ENCODE measurements at regions of chr11 and their contacts with region 1.

Region 1: DNA sequence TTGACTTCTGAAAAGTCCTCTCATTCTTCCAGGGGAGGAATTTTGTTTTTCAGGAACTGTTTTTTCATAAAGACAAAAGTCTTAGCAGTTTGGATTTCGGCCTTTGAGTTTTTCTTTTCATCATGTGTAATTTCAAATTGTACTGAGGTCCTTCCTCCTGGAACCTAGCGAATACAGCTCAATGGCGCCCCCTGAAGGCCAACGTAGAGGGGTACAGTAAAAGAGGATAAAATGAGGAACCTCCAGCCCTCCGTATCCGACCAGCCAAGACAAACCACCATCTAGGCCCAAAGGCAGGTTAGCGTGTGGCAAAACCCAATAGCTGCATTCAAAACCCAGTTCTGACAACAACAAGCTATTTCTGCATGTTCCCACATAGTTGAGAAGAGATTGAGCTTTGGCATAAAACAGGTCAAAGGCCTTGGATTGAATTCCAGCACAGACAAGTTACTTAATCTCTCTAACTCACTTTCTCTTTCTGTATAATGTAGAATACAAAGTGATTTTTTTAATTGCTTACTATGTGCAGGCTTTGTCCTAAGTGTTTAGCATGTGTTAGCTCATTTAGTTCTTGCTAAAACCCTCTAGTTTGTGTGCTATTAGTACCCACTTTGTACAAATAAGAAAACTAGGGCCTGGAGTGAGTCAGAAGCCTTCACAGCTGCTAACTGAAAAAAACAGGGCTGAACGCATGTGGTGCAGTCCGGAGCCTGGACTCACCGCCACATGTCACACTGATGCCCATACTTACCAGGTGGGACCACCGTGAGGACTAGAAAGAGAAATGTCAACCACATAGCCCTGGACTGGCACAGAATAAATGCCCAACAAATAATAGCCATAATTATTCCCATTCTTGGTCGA is 43.2 kb upstream of the ETS1 start:
- DNase-seq: peak; percentile 97
- H3K4me3 Mint-ChIP-seq: peak overlapping the region; percentile 60
- H3K27ac Mint-ChIP-seq: peak overlapping the region; percentile 84
- H3K4me1 Mint-ChIP-seq: peaks cover 59% of the 10 kb centered on the region
- H3K27me3 Mint-ChIP-seq: no peaks in the 10 kb centered on the region

Region 2: GRCh38 chr11:128172046-128172878 is 458.3 kb before region 1 on chr11:
- CTCF ChIA-PET with region 1: interaction called, 190 read pairs
- intact Hi-C with region 1: loop called (anchors 1 kb)
- DNase-seq: peak; percentile 96
- H3K4me3 Mint-ChIP-seq: no peak overlapping the region
- H3K27ac Mint-ChIP-seq: no peak overlapping the region
- H3K4me1 Mint-ChIP-seq: peaks cover 7% of the 10 kb centered on the region
- H3K27me3 Mint-ChIP-seq: no peaks in the 10 kb centered on the region

Region 3: DNA sequence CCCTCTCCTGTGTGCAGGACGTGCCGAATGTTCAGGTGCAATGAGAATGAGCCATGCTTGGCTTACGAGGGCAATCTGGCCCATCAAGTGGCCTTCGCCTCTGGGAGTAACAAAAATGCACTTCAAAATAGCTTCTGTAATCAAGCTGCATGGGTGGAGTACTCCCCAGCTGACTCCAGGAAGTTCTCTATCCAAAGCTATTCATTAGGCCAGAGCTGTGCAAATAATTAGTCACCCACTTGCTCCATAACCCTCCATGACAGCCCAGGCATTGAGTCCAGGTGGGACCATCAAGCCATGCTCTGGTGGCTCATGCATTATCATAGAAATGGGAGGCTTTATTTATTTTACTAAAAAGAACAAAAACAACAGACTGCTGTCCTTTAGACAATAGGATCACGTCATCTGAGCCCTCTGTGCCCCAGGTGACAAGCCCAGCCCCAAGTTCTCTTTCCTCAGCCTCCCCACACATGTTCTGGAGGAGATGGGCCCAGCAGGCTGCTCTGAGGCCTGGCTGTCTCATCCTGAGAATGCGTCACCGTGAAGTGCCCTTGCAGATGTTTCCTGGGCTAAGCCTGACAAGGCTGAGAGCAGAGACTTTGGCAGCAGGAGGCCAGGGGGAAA is 288.0 kb before region 1 on chr11:
- CTCF ChIA-PET with region 1: interaction called, 4 read pairs
- intact Hi-C with region 1: loop called (anchors 1 kb)
- DNase-seq: peak; percentile 93
- H3K4me3 Mint-ChIP-seq: peak overlapping the region; percentile 73
- H3K27ac Mint-ChIP-seq: peak overlapping the region; percentile 89
- H3K4me1 Mint-ChIP-seq: peaks cover 93% of the 10 kb centered on the region
- H3K27me3 Mint-ChIP-seq: no peaks in the 10 kb centered on the region

Region 4: GRCh38 chr11:128506999-128507611 is 123.5 kb before region 1 on chr11:
- CTCF ChIA-PET with region 1: interaction called, 69 read pairs
- intact Hi-C with region 1: loop called (anchors 1 kb)
- DNase-seq: peak; percentile 82
- H3K4me3 Mint-ChIP-seq: peak overlapping the region; percentile 77
- H3K27ac Mint-ChIP-seq: peak overlapping the region; percentile 97
- H3K4me1 Mint-ChIP-seq: peaks cover 88% of the 10 kb centered on the region
- H3K27me3 Mint-ChIP-seq: no peaks in the 10 kb centered on the region

Region 5: DNA sequence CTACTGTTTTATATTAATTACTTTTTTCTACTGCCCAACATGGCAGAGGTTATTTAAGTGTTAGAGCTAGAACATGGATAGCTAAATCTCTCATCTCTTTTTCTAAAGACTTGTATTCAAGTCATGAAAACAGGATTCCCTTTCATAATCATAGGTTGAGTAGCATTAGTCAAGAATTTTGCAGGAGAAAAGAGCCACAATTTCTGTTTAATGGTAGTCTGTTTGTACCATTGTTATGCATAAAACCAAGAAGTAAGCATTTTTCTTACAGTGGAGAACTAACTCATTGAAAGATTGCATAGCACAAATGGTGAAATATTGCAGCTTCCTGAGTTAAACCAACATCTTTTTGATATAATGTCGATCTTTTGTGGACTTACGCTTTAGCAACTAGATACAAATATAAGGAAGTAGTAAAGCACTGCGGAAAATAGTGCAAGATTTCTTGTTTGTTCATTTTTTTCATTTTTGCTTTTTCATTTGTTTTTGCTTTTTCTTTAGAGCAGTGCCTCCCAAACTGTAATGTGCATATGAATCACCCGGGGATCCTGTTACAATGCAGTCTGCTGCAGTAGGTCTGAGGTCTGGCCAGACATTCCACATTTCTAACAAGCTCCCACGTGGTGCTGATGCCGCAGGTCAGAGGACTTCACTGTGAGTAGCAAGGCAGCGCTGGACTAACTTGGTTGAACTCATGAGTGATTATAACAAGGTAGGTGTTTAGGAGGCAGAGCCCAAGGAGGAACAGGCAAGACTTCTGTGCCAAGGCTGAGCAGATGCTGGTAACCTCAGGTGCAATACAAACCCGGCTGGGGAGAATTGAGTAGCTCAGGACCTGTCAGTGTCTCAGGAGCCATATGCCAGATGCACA is 47.9 kb before region 1 on chr11:
- CTCF ChIA-PET with region 1: interaction called, 10 read pairs
- intact Hi-C with region 1: no loop called
- DNase-seq: peak; percentile 50
- H3K4me3 Mint-ChIP-seq: peak overlapping the region; percentile 69
- H3K27ac Mint-ChIP-seq: peak overlapping the region; percentile 78
- H3K4me1 Mint-ChIP-seq: peaks cover 62% of the 10 kb centered on the region
- H3K27me3 Mint-ChIP-seq: no peaks in the 10 kb centered on the region

Region 6: GRCh38 chr11:128720522-128720985 is 90.0 kb after region 1 on chr11:
- CTCF ChIA-PET with region 1: no interaction called
- intact Hi-C with region 1: no loop called
- DNase-seq: peak; percentile 72
- H3K4me3 Mint-ChIP-seq: peak overlapping the region; percentile 73
- H3K27ac Mint-ChIP-seq: peak overlapping the region; percentile 87
- H3K4me1 Mint-ChIP-seq: peaks cover 97% of the 10 kb centered on the region
- H3K27me3 Mint-ChIP-seq: no peaks in the 10 kb centered on the region

Region 7: GRCh38 chr11:128783513-128783912 is 152.9 kb after region 1 on chr11:
- CTCF ChIA-PET with region 1: no interaction called
- intact Hi-C with region 1: no loop called
- DNase-seq: peak; percentile 13
- H3K4me3 Mint-ChIP-seq: no peak overlapping the region
- H3K27ac Mint-ChIP-seq: no peak overlapping the region
- H3K4me1 Mint-ChIP-seq: peaks cover 25% of the 10 kb centered on the region
- H3K27me3 Mint-ChIP-seq: no peaks in the 10 kb centered on the region

Region 8: GRCh38 chr11:128831174-128832120 is 200.8 kb after region 1 on chr11:
- CTCF ChIA-PET with region 1: interaction called, 36 read pairs
- intact Hi-C with region 1: loop called (anchors 1 kb)
- DNase-seq: peak; percentile 96
- H3K4me3 Mint-ChIP-seq: peak overlapping the region; percentile 8
- H3K27ac Mint-ChIP-seq: peak overlapping the region; percentile 85
- H3K4me1 Mint-ChIP-seq: peaks cover 17% of the 10 kb centered on the region
- H3K27me3 Mint-ChIP-seq: no peaks in the 10 kb centered on the region

Region 9: GRCh38 chr11:129504956-129505665 is 874.5 kb after region 1 on chr11:
- CTCF ChIA-PET with region 1: no interaction called
- intact Hi-C with region 1: no loop called
- DNase-seq: no peak
- H3K4me3 Mint-ChIP-seq: no peak overlapping the region
- H3K27ac Mint-ChIP-seq: no peak overlapping the region
- H3K4me1 Mint-ChIP-seq: no peaks in the 10 kb centered on the region
- H3K27me3 Mint-ChIP-seq: no peaks in the 10 kb centered on the region